Endothelial cell of umbilical vein (primary cell): ENCODE measurements at regions of chr2 and their contacts with region 1.

Region 1: DNA sequence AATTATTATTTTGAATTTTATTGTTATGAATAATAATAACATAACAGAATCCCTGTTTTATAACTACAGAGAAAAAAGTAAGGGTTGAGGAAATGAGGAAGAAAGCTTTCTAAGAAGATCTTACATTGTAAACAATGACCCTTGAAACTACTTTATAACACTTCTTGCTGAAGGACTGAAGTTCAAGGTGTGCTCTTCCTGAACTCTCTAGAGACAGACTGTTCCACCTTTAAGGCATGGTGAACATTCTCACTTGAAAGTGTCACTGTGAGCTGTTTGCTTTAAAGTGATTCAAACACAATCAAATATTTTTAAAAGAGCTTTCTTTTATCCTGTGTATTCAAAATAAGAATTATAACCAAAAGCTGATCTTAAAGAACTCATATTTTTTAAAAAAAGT is 131.5 kb downstream of the DNAH7 start:
- DNase-seq: no peak
- H3K4me3 ChIP-seq: no peak overlapping the region
- H3K27ac ChIP-seq: no peak overlapping the region
- H3K4me1 ChIP-seq: no peaks in the 10 kb centered on the region
- H3K27me3 ChIP-seq: peaks cover 0 to 5% of the 10 kb centered on the region in 2 experiments
- CTCF ChIP-seq: no peak
- POLR2A ChIP-seq: no peak

Region 2: GRCh38 chr2:195498176-195498575 is 439.0 kb before region 1 on chr2:
- CTCF ChIA-PET with region 1: interaction called, 58 read pairs
- POLR2A ChIA-PET with region 1: no interaction called
- dilution Hi-C with region 1: no loop called
- intact Hi-C with region 1: loop called (anchors 2 kb)
- DNase-seq: peak; percentile 38
- H3K4me3 ChIP-seq: no peak overlapping the region
- H3K27ac ChIP-seq: no peak overlapping the region
- H3K4me1 ChIP-seq: no peaks in the 10 kb centered on the region
- H3K27me3 ChIP-seq: no peaks in the 10 kb centered on the region
- CTCF ChIP-seq: peak in 1 of 2 donors; percentile 23
- POLR2A ChIP-seq: no peak

Region 3: DNA sequence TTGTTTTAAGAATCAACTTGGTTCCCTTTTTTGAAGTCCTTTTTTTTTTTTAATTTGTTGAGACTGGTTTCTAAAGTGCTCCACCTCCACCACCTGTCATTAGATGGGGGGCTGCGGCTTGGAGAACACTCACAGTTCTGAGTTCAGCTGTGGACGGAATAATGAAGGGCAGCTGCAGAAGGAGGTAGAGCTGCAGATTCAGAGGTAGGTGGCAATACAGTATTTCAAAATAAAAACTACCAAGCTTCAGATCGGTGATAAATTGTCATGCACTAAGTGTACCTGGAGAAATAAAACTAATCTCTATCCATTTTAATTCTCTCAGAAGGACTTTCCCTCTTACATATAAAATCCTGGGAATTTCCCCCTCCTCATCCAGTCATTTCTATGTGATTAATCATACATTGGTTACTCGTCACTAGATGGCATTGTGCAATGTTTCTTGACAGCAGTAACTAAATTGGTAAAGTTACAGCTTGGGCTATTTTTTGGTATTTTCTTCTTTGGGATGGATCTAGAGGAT is 361.2 kb before region 1 on chr2:
- CTCF ChIA-PET with region 1: interaction called, 38 read pairs
- POLR2A ChIA-PET with region 1: no interaction called
- dilution Hi-C with region 1: no loop called
- intact Hi-C with region 1: loop called (anchors 2 kb)
- DNase-seq: peak; percentile 59
- H3K4me3 ChIP-seq: no peak overlapping the region
- H3K27ac ChIP-seq: no peak overlapping the region
- H3K4me1 ChIP-seq: no peaks in the 10 kb centered on the region
- H3K27me3 ChIP-seq: no peaks in the 10 kb centered on the region
- CTCF ChIP-seq: peak in 1 of 2 donors; percentile 1
- POLR2A ChIP-seq: no peak

Region 4: DNA sequence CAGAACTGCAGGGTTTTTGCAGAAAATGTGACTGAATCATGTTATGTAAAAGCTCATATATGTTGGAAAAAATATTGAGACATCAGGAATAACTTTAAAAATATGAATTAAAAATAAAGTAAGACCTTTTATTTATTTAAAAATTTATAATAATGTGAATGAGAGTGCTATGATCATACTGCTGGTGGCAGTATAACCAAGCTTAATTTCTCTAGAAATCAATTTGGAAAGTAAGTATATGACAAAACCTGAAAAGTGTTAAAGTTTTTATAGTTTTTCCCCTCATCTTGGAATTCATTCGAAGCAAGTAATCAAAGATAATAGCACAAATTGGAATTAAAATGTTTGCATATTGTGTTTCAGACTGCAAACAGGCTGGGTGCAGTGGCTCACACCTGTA is 272.6 kb before region 1 on chr2:
- CTCF ChIA-PET with region 1: interaction called, 53 read pairs
- POLR2A ChIA-PET with region 1: no interaction called
- dilution Hi-C with region 1: no loop called
- intact Hi-C with region 1: loop called (anchors 1 kb)
- DNase-seq: no peak
- H3K4me3 ChIP-seq: no peak overlapping the region
- H3K27ac ChIP-seq: no peak overlapping the region
- H3K4me1 ChIP-seq: peaks cover 9% of the 10 kb centered on the region
- H3K27me3 ChIP-seq: no peaks in the 10 kb centered on the region
- CTCF ChIP-seq: no peak
- POLR2A ChIP-seq: no peak